PC-3 (cell line): ENCODE measurements at regions of chr2 and their contacts with region 1.

Region 1: DNA sequence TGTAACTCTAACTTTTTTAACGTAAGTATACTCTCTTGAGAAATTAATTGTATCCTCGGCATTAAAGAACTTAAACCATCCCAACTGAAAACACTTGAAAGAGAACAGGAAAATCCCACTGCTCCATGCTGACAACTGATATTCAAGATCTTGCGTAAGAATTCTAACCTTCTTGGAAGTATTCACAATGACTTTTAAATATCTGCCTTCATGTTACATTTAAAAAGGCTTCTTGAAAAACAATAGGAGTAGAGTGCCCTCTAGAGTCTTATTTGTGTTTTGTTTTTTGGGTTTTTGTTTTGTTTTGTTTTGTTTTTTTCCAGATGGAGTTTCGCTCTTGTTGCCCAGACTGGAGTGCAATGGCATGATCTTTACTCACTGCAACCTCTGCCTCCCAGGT is 65.4 kb upstream of the DNAJC10 start:
- DNase-seq: peak; percentile 61
- ATAC-seq: no peak
- H3K4me3 ChIP-seq: 0 out of 2 replicates have a peak overlapping the region, but pooled peaks have one; percentile 24
- H3K27ac ChIP-seq: no peak overlapping the region
- H3K4me1 ChIP-seq: no peaks in the 10 kb centered on the region
- H3K27me3 ChIP-seq: no peaks in the 10 kb centered on the region
- CTCF ChIP-seq: peak; percentile 62

Region 2: GRCh38 chr2:182186132-182186735 is 464.5 kb before region 1 on chr2:
- CTCF ChIA-PET with region 1: no interaction called
- POLR2A ChIA-PET with region 1: no interaction called
- intact Hi-C with region 1: loop called (anchors 1 kb)
- DNase-seq: peak; percentile 86
- ATAC-seq: peak; percentile 46
- H3K4me3 ChIP-seq: no peak overlapping the region
- H3K27ac ChIP-seq: no peak overlapping the region
- H3K4me1 ChIP-seq: no peaks in the 10 kb centered on the region
- H3K27me3 ChIP-seq: no peaks in the 10 kb centered on the region; the same call in 1 of the 2 replicates
- CTCF ChIP-seq: peak; percentile 85

Region 3: GRCh38 chr2:182240862-182241371 is 409.8 kb before region 1 on chr2:
- CTCF ChIA-PET with region 1: interaction called, 6 read pairs
- POLR2A ChIA-PET with region 1: no interaction called
- intact Hi-C with region 1: loop called (anchors 2 kb)
- DNase-seq: peak; percentile 43
- ATAC-seq: no peak
- H3K4me3 ChIP-seq: no peak overlapping the region
- H3K27ac ChIP-seq: no peak overlapping the region
- H3K4me1 ChIP-seq: peaks cover 9% of the 10 kb centered on the region
- H3K27me3 ChIP-seq: no peaks in the 10 kb centered on the region
- CTCF ChIP-seq: peak; percentile 71

Region 4: GRCh38 chr2:182301093-182301492 is 349.6 kb before region 1 on chr2:
- CTCF ChIA-PET with region 1: no interaction called
- POLR2A ChIA-PET with region 1: no interaction called
- intact Hi-C with region 1: loop called (anchors 1 kb)
- DNase-seq: peak; percentile 33
- ATAC-seq: peak; percentile 48
- H3K4me3 ChIP-seq: no peak overlapping the region
- H3K27ac ChIP-seq: no peak overlapping the region
- H3K4me1 ChIP-seq: peaks cover 11% of the 10 kb centered on the region
- H3K27me3 ChIP-seq: no peaks in the 10 kb centered on the region
- CTCF ChIP-seq: no peak

Region 5: GRCh38 chr2:182499706-182500470 is 150.8 kb before region 1 on chr2:
- CTCF ChIA-PET with region 1: no interaction called
- POLR2A ChIA-PET with region 1: no interaction called
- intact Hi-C with region 1: no loop called
- DNase-seq: no peak
- ATAC-seq: no peak
- H3K4me3 ChIP-seq: no peak overlapping the region
- H3K27ac ChIP-seq: no peak overlapping the region
- H3K4me1 ChIP-seq: no peaks in the 10 kb centered on the region
- H3K27me3 ChIP-seq: no peaks in the 10 kb centered on the region
- CTCF ChIP-seq: no peak

Region 6: DNA sequence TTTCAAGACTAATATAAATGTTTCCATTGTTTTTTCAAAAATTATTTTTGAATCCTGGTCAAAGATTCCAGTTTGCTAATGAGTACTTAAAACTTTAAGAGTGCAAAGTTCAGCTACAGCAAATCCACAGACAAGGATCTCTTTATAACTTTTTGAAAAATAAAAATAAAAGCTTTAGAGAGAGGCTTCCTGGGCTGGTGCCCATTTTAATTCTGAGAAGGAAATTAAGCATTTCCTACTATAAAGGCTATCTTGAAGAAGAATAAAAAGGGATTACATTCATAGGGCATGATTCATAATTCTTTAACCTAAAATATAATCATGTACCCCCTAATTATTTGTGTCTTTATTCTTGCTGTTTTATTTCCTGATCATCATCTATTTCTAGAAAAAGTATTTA is 103.5 kb after region 1 on chr2:
- CTCF ChIA-PET with region 1: no interaction called
- POLR2A ChIA-PET with region 1: no interaction called
- intact Hi-C with region 1: no loop called
- DNase-seq: no peak
- ATAC-seq: no peak
- H3K4me3 ChIP-seq: no peak overlapping the region
- H3K27ac ChIP-seq: no peak overlapping the region
- H3K4me1 ChIP-seq: no peaks in the 10 kb centered on the region
- H3K27me3 ChIP-seq: no peaks in the 10 kb centered on the region
- CTCF ChIP-seq: no peak